ENCODE measurements at regions of chr11 and their contacts with region 1.

Region 1: DNA sequence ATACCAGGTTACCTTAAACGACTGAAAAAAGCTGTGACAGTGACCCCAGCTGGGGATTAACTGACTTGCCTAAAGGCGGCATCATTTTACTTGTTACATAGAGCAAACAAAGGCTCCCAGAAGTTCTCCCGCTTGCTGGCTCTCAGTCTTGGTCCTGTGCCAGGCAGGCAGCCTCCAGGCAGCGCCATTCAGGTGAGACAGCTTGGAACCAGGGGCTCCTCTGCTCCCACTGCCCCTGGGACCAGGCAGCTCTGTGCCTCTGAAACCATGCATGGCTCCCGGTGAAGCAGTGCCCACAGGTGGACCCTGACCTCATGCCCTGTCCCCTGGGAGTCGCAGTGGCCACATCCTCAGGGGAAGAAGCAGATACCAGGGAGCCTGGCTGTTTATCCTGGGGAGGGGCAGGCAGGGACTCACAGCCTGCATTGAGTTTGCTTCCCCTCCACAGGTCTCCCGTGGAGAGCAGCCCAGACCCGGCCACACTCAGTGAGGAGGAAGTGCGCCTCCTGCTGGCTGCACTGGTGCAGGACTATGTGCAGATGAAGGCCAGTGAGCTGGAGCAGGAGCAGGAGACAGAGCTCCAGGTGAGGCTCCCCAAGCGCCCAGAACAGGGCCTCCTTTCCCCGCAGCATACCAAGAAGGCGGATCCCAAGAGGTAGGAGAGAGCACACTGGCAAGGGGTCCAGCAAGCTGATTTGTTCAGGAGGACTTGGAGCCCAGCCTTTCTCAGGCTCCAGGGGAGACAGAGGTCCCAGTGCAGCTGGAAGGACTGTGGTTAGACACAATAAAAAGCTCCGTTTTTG is 15.6 kb upstream of the CYP2R1 start:
- DNase-seq: no peak
- ATAC-seq: peak; percentile 80
- H3K4me3 ChIP-seq: peak overlapping the region in 1 of 2 experiments; percentile 25; a peak in 2 of 4 replicates
- H3K27ac ChIP-seq: no peak overlapping the region
- H3K4me1 ChIP-seq: peaks cover 5% of the 10 kb centered on the region
- H3K27me3 ChIP-seq: peaks cover 8% of the 10 kb centered on the region
- CTCF ChIP-seq: peak; percentile 92

Region 2: DNA sequence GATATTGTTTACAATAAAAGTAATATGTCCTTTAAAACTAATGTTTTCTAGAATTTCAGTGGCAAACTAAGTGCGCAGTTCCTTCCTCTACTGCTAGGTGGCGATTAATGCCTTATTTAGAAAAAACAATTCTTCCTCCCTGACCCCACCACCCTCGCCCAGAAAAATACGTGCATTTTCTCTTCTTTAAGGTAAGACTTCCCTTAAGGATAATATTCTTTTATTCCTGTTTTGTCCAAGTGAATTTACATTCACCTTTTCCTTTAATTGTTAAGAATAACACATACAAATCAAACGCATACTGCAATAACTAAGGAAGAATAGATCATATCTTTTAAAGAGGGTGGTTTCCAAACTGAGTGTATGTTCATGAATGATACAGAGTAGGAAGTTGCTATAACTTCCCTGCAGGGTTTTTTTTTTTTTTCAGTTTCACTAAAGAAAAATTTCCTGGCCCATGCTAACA is 370.4 kb before region 1 on chr11:
- CTCF ChIA-PET with region 1: interaction called, 3 read pairs
- POLR2A ChIA-PET with region 1: no interaction called
- in situ Hi-C with region 1: no loop called
- intact Hi-C with region 1: loop called (anchors 2 kb)
- DNase-seq: peak; percentile 24
- ATAC-seq: peak; percentile 56; the same call in 1 of the 2 replicates
- H3K4me3 ChIP-seq: no peak overlapping the region
- H3K27ac ChIP-seq: no peak overlapping the region
- H3K4me1 ChIP-seq: peaks cover 3% of the 10 kb centered on the region; the same call in 1 of the 2 replicates
- H3K27me3 ChIP-seq: no peaks in the 10 kb centered on the region
- CTCF ChIP-seq: peak; percentile 83

Region 3: GRCh38 chr11:14892036-14892567 is 15.5 kb before region 1 on chr11 and contains the start of gene CYP2R1:
- CTCF ChIA-PET with region 1: interaction called, 10 read pairs
- POLR2A ChIA-PET with region 1: interaction called, 3 read pairs
- in situ Hi-C with region 1: no loop called
- intact Hi-C with region 1: no loop called
- DNase-seq: peak; percentile 96
- ATAC-seq: peak; percentile 99
- H3K4me3 ChIP-seq: peak within 1 kb of the TSS; percentile 68 to 89
- H3K27ac ChIP-seq: peak within 1 kb of the TSS; percentile 92
- H3K4me1 ChIP-seq: peaks cover 5% of the 10 kb centered on the region
- H3K27me3 ChIP-seq: no peaks in the 10 kb centered on the region
- CTCF ChIP-seq: no peak; the same call in 1 of the 2 replicates
- total RNA-seq, gene CYP2R1: 11.2 TPM

Region 4: DNA sequence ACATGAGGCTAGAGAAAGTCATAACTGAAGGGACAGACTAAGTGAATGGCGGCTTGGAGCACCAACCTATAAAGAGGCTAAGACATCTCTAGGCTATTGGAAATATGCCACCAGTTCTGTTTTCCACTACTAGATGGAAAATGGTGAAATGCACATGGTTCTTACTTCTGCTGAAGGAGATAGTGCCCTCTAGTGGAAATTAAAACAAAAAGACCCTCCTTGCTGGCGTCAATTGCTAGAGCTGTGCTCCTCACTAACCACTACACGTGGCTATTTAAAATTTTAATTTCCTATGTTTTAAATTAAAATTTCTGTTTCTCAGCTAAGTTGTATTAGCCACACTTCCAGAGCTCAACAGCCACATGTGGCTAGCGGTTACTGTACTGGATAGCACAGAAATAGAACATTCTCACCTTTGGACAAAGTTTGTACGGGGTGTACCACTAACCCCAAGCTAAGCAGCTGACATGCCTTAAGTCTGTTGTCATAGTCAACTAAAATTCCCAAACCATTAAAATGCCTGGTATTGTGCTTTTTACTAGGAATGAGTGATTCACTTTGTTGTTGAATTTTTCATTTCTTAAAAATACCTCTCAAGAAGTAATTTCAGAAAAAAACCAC is 98.6 kb after region 1 on chr11:
- CTCF ChIA-PET with region 1: interaction called, 9 read pairs
- POLR2A ChIA-PET with region 1: no interaction called
- in situ Hi-C with region 1: no loop called
- intact Hi-C with region 1: loop called (anchors 2 kb)
- DNase-seq: peak; percentile 30
- ATAC-seq: peak; percentile 77
- H3K4me3 ChIP-seq: no peak overlapping the region
- H3K27ac ChIP-seq: no peak overlapping the region
- H3K4me1 ChIP-seq: no peaks in the 10 kb centered on the region
- H3K27me3 ChIP-seq: peaks cover 9% of the 10 kb centered on the region
- CTCF ChIP-seq: peak; percentile 74

Region 5: DNA sequence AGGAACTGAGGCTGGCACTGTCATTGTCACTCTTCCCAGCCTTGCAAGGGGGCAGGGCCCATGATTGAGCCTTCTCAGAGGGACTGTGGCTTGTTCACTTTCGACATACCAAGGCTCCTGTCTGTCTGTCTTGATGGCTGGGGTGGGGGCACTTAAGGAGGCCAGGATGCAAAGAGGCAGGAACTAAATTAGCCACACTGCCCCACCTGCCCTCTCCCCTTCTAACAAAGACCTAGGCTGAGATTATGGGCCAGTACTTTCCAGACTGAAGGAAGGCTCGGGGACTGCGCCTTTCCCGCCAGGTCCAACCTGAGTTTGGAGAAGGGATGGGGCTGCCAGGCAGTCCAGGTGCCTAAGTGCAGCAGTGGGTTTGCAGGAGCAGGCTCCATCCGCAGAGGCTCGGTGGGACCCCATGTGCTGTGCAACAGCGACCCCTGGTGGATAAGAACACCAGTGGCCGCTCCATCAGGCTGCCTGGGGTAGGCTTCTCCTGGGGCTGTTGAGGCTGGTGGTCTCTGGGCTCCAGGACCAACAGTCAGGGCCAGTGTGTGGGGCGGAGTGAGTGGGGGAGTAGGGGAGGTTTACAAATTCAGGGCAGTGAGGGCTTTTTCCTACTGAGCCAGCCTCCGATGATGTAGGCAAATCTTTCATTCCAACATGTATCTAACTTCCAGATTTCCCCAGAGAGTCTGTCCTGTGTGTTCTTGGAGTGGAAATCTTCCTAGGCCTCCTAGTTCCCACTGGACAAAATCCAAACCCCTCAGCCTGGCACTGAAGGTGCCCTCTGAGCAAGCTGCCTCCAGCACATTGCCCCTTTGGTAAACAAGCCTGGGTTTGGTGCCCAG is 301.0 kb after region 1 on chr11:
- CTCF ChIA-PET with region 1: interaction called, 6 read pairs
- POLR2A ChIA-PET with region 1: no interaction called
- in situ Hi-C with region 1: no loop called
- intact Hi-C with region 1: loop called (anchors 1 kb)
- DNase-seq: peak; percentile 20
- ATAC-seq: peak; percentile 98
- H3K4me3 ChIP-seq: no peak overlapping the region
- H3K27ac ChIP-seq: no peak overlapping the region
- H3K4me1 ChIP-seq: no peaks in the 10 kb centered on the region
- H3K27me3 ChIP-seq: no peaks in the 10 kb centered on the region
- CTCF ChIP-seq: peak; percentile 89